ENCODE measurements at regions of chr11 and their contacts with region 1.

Region 1: GRCh38 chr11:67317205-67317887 is 14.0 kb downstream of the SSH3 start:
- DNase-seq: peak; percentile 96 to 99 (median 98)
- ATAC-seq: peak; percentile 78
- H3K4me3 ChIP-seq: peak overlapping the region; percentile 82
- H3K4me3 Mint-ChIP-seq: peak overlapping the region; percentile 99
- H3K27ac ChIP-seq: peak overlapping the region; percentile 46 to 70
- H3K27ac Mint-ChIP-seq: peak overlapping the region; percentile 85
- H3K4me1 ChIP-seq: peaks cover 42% of the 10 kb centered on the region
- H3K4me1 Mint-ChIP-seq: peaks cover 54% of the 10 kb centered on the region
- H3K27me3 ChIP-seq: no peaks in the 10 kb centered on the region
- H3K27me3 Mint-ChIP-seq: no peaks in the 10 kb centered on the region
- CTCF ChIP-seq: peak; percentile 88

Region 2: DNA sequence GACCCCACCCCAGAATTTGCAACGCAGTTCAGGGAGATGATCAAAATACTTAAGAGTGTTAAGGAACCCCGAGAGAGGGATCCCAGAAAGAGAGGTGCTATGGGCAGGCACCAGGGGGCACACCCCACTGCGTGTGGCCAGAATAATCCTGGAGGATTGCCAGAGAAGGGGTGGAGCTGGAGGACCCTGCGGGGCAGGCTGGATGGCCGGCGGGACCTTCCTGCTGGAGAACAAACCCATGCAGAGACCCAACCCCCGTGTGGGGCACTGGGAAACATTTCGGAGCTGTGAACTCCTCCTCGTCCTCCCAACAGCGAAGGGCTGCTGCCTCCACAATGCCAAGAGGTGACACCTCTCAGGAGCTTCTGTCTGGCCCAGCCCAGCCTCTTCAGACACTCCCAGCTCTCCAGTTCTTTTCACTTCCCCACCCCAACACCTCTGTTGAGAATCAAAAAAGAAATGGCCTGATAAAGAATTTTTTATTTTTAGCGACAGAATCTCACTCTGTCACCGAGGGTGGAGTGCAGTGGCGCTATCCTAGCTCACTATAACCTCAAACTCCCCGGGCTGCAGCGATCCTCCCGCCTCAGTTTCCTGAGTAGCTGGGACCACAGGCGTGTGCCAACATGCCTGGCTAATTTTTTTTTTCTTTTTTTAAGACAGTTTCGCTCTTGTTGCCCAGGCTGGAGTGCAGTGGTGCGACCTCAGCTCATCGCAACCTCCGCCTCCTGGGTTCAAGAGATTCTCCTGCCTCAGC is 235.1 kb before region 1 on chr11:
- CTCF ChIA-PET with region 1: no interaction called
- POLR2A ChIA-PET with region 1: no interaction called
- intact Hi-C with region 1: loop called in 1 of 2 experiments (anchors 5 kb)
- DNase-seq: peak in 4 of 14 experiments; percentile 10 to 39 (median 21)
- ATAC-seq: peak; percentile 37
- H3K4me3 ChIP-seq: no peak overlapping the region
- H3K4me3 Mint-ChIP-seq: no peak overlapping the region
- H3K27ac ChIP-seq: no peak overlapping the region
- H3K27ac Mint-ChIP-seq: no peak overlapping the region
- H3K4me1 ChIP-seq: peaks cover 12% of the 10 kb centered on the region
- H3K4me1 Mint-ChIP-seq: peaks cover 11% of the 10 kb centered on the region
- H3K27me3 ChIP-seq: no peaks in the 10 kb centered on the region
- H3K27me3 Mint-ChIP-seq: peaks cover 11% of the 10 kb centered on the region
- CTCF ChIP-seq: no peak

Region 3: GRCh38 chr11:67265633-67266423 is 51.5 kb before region 1 on chr11:
- CTCF ChIA-PET with region 1: interaction called, 64 read pairs
- POLR2A ChIA-PET with region 1: interaction called, 38 read pairs
- intact Hi-C with region 1: loop called (anchors 1 kb)
- DNase-seq: peak; percentile 58 to 92 (median 76)
- ATAC-seq: peak; percentile 47
- H3K4me3 ChIP-seq: peak overlapping the region; percentile 27
- H3K4me3 Mint-ChIP-seq: peak overlapping the region; percentile 85
- H3K27ac ChIP-seq: peak overlapping the region; percentile 15 to 33
- H3K27ac Mint-ChIP-seq: peak overlapping the region; percentile 88
- H3K4me1 ChIP-seq: peaks cover 70% of the 10 kb centered on the region
- H3K4me1 Mint-ChIP-seq: peaks cover 74% of the 10 kb centered on the region
- H3K27me3 ChIP-seq: no peaks in the 10 kb centered on the region
- H3K27me3 Mint-ChIP-seq: no peaks in the 10 kb centered on the region
- CTCF ChIP-seq: peak; percentile 59

Region 4: DNA sequence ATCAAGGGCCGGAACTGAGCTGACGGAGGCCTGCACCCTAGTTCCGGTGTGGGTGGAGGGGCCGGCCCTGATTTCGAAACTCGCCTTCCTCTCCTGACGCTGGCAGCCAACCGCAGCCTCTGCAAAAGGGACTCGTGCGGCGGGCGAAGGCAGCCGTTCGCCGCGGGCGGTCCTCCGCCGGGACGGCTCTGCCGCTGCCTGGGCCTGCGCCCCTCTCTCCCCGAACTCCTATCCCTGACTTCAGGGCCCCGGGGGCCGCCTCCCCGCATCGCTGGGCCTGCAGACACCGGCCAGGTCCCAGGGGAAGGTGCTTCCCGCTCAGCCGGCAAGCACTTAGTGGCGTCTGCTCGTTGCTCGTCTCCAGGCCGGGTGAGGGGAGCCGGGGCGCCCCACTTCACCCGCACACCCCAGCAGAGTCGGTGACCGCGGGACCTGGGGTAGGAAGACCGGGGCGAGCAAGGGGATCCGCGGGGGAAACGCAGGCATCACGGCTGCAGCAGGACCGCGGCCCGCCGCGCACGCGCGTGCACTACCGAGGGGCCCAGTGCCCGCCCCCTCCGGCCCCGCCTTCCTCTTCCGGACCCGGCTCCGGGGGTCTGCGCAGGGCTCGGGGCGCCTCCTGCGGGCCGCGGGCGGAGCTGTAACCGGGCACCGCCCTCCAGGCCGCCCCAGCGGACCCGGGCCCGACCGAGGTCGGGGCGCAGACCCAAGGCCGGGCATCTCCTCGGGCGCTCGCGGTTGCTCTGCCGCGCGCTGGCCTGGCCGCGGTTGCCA is 28.7 kb before region 1 on chr11:
- CTCF ChIA-PET with region 1: interaction called, 38 read pairs
- POLR2A ChIA-PET with region 1: interaction called, 61 read pairs
- intact Hi-C with region 1: loop called (anchors 1 kb)
- DNase-seq: peak; percentile 79 to 95 (median 89)
- ATAC-seq: peak; percentile 63
- H3K4me3 ChIP-seq: peak overlapping the region; percentile 91
- H3K4me3 Mint-ChIP-seq: peak overlapping the region; percentile 83
- H3K27ac ChIP-seq: peak overlapping the region; percentile 90 to 95
- H3K27ac Mint-ChIP-seq: peak overlapping the region; percentile 90
- H3K4me1 ChIP-seq: peaks cover 86% of the 10 kb centered on the region
- H3K4me1 Mint-ChIP-seq: peaks cover 49% of the 10 kb centered on the region
- H3K27me3 ChIP-seq: no peaks in the 10 kb centered on the region
- H3K27me3 Mint-ChIP-seq: no peaks in the 10 kb centered on the region
- CTCF ChIP-seq: peak; percentile 48

Region 5: DNA sequence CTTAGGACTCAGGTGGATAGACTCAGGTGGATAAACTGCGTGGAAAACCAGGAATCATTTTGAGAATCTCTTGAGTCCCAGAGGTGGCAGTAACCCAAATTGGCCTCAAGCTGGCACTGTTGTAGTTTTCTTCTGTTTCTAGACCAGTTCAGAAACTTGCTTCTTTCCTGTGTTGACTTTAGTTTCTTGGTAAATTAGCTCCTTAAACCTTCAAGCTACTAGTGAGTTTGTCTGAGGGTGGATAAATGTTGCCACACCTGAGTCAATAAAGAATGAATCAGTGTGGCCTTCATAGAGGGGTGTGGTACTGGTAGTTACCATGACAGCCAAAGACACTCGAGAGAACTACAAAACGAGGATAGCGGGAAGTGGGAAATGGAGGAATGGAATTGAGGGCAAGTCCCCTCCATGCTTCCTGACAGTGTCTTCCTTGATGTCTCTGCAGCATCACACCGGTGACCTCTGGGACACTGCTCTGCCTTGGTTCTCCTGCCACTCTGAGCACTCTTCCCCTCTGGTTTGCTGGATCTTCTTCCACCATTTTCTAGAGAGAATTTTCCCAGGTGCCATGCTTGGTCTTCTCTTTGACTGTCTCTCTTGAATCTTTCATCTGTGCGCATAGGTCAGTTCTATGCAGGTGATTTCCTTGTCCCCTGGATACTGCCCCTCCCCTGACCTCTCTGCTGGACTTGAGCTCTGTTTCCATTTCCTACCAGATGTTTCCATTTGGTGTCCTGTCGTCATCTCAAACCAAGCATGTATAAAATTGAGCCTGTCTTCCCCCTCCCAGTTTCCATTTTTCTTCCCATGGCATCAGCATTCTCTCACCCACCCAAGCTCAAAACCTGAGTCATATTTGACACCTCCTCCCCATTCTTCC is 28.8 kb after region 1 on chr11:
- CTCF ChIA-PET with region 1: interaction called, 21 read pairs
- POLR2A ChIA-PET with region 1: interaction called, 21 read pairs
- intact Hi-C with region 1: loop called in 1 of 2 experiments (anchors 2 kb)
- DNase-seq: peak in 4 of 14 experiments; percentile 39 to 65 (median 55)
- ATAC-seq: peak; percentile 71
- H3K4me3 ChIP-seq: no peak overlapping the region
- H3K4me3 Mint-ChIP-seq: peak overlapping the region; percentile 57
- H3K27ac ChIP-seq: peak overlapping the region in 1 of 2 donors; percentile 18
- H3K27ac Mint-ChIP-seq: peak overlapping the region; percentile 78
- H3K4me1 ChIP-seq: peaks cover 40% of the 10 kb centered on the region
- H3K4me1 Mint-ChIP-seq: peaks cover 63% of the 10 kb centered on the region
- H3K27me3 ChIP-seq: no peaks in the 10 kb centered on the region
- H3K27me3 Mint-ChIP-seq: no peaks in the 10 kb centered on the region
- CTCF ChIP-seq: peak; percentile 81